A549 (cell line): ENCODE measurements at regions of chr14 and their contacts with region 1.

Region 1: DNA sequence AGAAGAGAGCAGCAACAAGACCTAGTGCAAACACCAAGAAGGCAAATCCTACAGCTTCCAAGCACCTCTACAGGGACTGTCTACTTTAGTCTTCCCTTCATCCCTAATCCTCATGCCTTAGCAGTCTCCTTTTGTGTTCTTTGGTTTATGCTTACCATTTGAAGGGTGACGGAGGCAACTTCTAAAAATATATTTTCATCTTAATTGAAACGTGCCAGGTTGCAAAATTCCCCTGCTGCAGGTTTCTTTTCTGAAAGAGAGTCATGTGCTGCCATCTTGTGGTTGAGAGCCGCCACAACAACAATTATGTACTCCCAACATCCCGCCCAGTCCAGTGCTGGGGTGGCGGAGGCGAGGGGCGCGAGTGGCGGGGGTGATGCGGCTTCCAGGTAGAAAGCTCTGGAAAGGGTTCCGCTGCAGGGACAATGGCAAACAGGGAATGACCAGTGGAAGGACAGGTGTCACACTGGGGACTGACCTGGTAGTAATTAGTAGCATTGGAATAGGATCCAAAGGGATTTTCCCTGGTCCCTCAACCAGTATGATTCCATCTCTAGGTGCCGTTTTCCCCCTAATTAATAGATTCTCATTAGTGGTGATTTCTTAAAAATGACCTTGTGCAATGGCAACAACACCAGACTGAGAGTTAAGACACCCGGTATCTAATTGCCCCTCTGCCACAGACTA is 80.3 kb upstream of the GNG2 start:
- DNase-seq: peak; percentile 61 to 72
- ATAC-seq: peak; percentile 38 to 76; a peak in 4 of 6 replicates
- H3K4me3 ChIP-seq: 0 out of 3 replicates have a peak overlapping the region, but pooled peaks have one; percentile 11
- H3K27ac ChIP-seq: no peak overlapping the region
- H3K4me1 ChIP-seq: no peaks in the 10 kb centered on the region
- CTCF ChIP-seq: peak; percentile 84
- EP300 ChIP-seq: no peak
- POLR2A ChIP-seq: no peak
- RAD21 ChIP-seq: peak; percentile 88 to 92

Region 2: DNA sequence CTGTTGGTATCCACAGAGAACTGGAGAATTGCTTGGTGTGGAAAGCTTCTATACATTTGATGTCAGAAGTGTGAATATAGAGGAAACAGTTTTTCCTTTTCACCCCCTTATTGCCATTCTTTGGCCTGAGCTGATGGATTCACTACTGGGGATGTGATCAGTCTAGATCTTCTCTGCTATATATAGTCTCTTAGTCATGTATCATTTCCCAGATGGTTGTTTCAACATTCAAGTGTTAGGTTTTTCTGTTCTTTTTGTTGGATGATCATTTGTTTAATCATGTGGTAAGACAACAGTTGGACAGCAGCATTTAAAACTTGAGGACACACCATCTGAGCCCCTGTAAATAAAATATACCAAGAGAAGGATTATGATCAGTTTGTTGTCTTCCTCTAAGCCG is 510.5 kb before region 1 on chr14:
- CTCF ChIA-PET with region 1: interaction called, 48 read pairs
- POLR2A ChIA-PET with region 1: no interaction called
- DNase-seq: no peak
- ATAC-seq: no peak
- H3K4me3 ChIP-seq: no peak overlapping the region
- H3K27ac ChIP-seq: no peak overlapping the region
- H3K4me1 ChIP-seq: no peaks in the 10 kb centered on the region
- CTCF ChIP-seq: no peak
- EP300 ChIP-seq: no peak
- POLR2A ChIP-seq: no peak
- RAD21 ChIP-seq: no peak

Region 3: GRCh38 chr14:51369814-51370213 is 410.3 kb before region 1 on chr14:
- CTCF ChIA-PET with region 1: interaction called, 11 read pairs
- POLR2A ChIA-PET with region 1: no interaction called
- DNase-seq: peak in 1 of 2 experiments; percentile 5
- ATAC-seq: no peak
- H3K4me3 ChIP-seq: no peak overlapping the region
- H3K27ac ChIP-seq: no peak overlapping the region
- H3K4me1 ChIP-seq: peaks cover 18% of the 10 kb centered on the region
- CTCF ChIP-seq: peak; percentile 49
- EP300 ChIP-seq: no peak
- POLR2A ChIP-seq: no peak
- RAD21 ChIP-seq: peak; percentile 64 to 71

Region 4: DNA sequence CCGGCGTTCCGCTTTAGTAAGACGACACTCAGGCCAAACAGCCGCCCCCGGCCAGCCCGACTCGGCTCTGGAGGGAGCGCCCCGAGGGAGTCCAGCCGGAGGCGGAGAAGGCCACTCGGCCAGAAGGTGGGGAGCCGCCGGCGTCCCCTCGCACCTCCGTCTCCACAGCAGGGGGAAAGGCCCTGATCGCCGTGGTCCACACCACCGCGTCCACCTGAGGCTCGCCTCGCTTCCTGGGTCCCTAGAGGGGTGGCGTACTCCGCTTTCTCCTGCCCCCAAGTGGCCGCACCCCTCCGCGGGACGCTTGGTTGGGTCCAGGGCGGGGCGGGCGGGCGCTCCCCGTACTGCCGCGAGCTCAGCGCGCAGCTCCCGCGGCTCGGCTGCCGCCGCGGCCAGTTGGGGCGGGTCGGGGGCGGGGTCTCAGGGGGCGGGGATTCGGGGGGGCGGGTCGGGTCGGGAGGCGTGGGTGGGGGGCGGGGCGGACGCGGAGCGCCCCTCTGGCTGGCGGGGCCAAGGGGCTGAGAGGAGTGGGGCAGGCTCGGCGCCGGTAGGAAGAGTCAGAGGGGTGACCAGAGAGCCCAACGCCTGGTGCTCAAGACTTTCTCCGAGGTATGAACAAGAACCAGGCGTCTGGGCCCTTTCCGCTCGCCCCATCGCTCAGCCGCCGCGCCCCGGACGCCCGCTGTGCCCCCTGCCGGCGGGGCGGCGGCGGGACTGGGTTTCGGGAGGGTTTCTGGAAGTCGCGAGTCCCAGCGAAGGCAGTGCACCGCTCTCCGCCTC is 128.6 kb before region 1 on chr14 and contains the start of gene FRMD6:
- CTCF ChIA-PET with region 1: interaction called, 70 read pairs
- POLR2A ChIA-PET with region 1: interaction called, 14 read pairs
- DNase-seq: peak; percentile 69 to 89
- ATAC-seq: peak; percentile 84 to 85
- H3K4me3 ChIP-seq: peak within 1 kb of the TSS; percentile 52
- H3K27ac ChIP-seq: peak within 1 kb of the TSS; percentile 96 to 97
- H3K4me1 ChIP-seq: peaks cover 43% of the 10 kb centered on the region
- CTCF ChIP-seq: peak; percentile 72
- EP300 ChIP-seq: no peak
- POLR2A ChIP-seq: peak; percentile 72
- RAD21 ChIP-seq: peak; percentile 32 to 63
- polyA plus RNA-seq, gene FRMD6: 23.1 and 23.5 TPM in 2 replicates

Region 5: GRCh38 chr14:51759950-51760349 is 20.2 kb before region 1 on chr14:
- CTCF ChIA-PET with region 1: interaction called, 29 read pairs
- POLR2A ChIA-PET with region 1: no interaction called
- DNase-seq: no peak
- ATAC-seq: no peak
- H3K4me3 ChIP-seq: no peak overlapping the region
- H3K27ac ChIP-seq: no peak overlapping the region
- H3K4me1 ChIP-seq: no peaks in the 10 kb centered on the region
- CTCF ChIP-seq: no peak
- EP300 ChIP-seq: no peak
- POLR2A ChIP-seq: no peak
- RAD21 ChIP-seq: no peak

Region 6: DNA sequence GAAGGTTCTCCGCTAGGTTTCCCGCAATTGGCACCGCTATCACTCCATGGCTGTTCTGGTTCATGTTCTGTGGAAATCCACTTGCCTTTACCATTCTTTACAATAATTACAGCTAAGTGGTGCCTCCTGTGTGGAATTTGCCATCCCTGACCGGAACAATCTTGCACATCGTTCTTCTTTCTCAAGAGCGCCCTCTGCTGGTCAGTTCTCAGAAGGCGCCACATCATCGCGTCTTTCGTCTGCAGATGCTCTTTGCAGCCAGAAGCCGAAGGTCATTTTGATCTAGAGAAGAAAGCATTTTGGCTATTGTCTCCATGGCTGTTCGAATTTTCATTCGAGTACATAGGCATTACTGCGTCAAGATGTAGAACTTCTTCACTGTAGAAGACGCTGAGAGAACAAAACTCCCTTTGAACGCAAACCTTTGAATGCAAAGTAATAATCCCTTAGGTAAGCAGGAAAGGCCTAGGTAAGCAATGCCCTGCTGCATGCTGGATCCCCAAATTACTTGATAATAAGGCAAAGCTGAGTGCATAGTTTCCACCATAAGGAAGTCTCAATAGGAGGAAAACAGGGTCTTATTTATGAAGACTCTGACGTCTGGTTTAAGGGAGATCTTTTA is 199.1 kb after region 1 on chr14:
- CTCF ChIA-PET with region 1: interaction called, 70 read pairs
- POLR2A ChIA-PET with region 1: no interaction called
- DNase-seq: peak; percentile 48 to 79
- ATAC-seq: peak; percentile 85 to 96
- H3K4me3 ChIP-seq: no peak overlapping the region
- H3K27ac ChIP-seq: no peak overlapping the region
- H3K4me1 ChIP-seq: no peaks in the 10 kb centered on the region
- CTCF ChIP-seq: peak; percentile 86
- EP300 ChIP-seq: no peak
- POLR2A ChIP-seq: no peak
- RAD21 ChIP-seq: peak; percentile 82 to 85

Region 7: GRCh38 chr14:52068615-52069303 is 288.6 kb after region 1 on chr14 and contains the start of gene NID2:
- CTCF ChIA-PET with region 1: no interaction called
- POLR2A ChIA-PET with region 1: no interaction called
- DNase-seq: peak; percentile 77 to 79
- ATAC-seq: peak; percentile 89 to 96
- H3K4me3 ChIP-seq: peak within 1 kb of the TSS; percentile 64
- H3K27ac ChIP-seq: peak within 1 kb of the TSS; percentile 60 to 82
- H3K4me1 ChIP-seq: 0 out of 3 replicates have a peak, but pooled peaks cover 5% of the 10 kb centered on the region
- CTCF ChIP-seq: no peak
- EP300 ChIP-seq: no peak
- POLR2A ChIP-seq: no peak
- RAD21 ChIP-seq: no peak
- polyA plus RNA-seq, gene NID2: 7.3 and 10.3 TPM in 2 replicates